GM12878 (cell line): ENCODE measurements at regions of chr9 and their contacts with region 1.

Region 1: GRCh38 chr9:89428901-89429890 is 68.7 kb downstream of the SEMA4D start:
- DNase-seq: no peak
- ATAC-seq: peak; percentile 25
- H3K4me3 ChIP-seq: no peak overlapping the region
- H3K27ac ChIP-seq: peak overlapping the region; percentile 90
- H3K4me1 ChIP-seq: peaks cover 81% of the 10 kb centered on the region
- H3K27me3 ChIP-seq: no peaks in the 10 kb centered on the region
- CTCF ChIP-seq: peak; percentile 60 to 84 (median 74)
- EP300 ChIP-seq: no peak
- POLR2A ChIP-seq: no peak
- RAD21 ChIP-seq: peak; percentile 85

Region 2: GRCh38 chr9:89318123-89319014 is 110.8 kb before region 1 on chr9 and contains the start of gene SECISBP2:
- CTCF ChIA-PET with region 1: interaction called, 4 read pairs
- POLR2A ChIA-PET with region 1: interaction called, 3 read pairs
- RAD21 ChIA-PET with region 1: no interaction called
- SMC1A ChIA-PET with region 1: interaction called, 7 read pairs
- in situ Hi-C with region 1: no loop called
- intact Hi-C with region 1: loop called (anchors 2 kb)
- DNase-seq: peak; percentile 79
- ATAC-seq: peak; percentile 92
- H3K4me3 ChIP-seq: peak within 1 kb of the TSS; percentile 74
- H3K27ac ChIP-seq: peak within 1 kb of the TSS; percentile 98
- H3K4me1 ChIP-seq: peaks cover 8% of the 10 kb centered on the region
- H3K27me3 ChIP-seq: no peaks in the 10 kb centered on the region
- CTCF ChIP-seq: peak; percentile 63 to 74 (median 72); a peak in 5 of 6 replicates
- EP300 ChIP-seq: peak; percentile 9 to 14; a peak in 2 of 4 replicates
- POLR2A ChIP-seq: peak; percentile 97
- RAD21 ChIP-seq: no peak; the same call in 1 of the 2 replicates
- polyA plus RNA-seq, gene SECISBP2: 4.6 to 6.6 TPM

Region 3: GRCh38 chr9:89410641-89411350 is 18.4 kb before region 1 on chr9:
- CTCF ChIA-PET with region 1: interaction called, 10 read pairs
- POLR2A ChIA-PET with region 1: interaction called, 11 read pairs
- RAD21 ChIA-PET with region 1: interaction called, 29 read pairs
- SMC1A ChIA-PET with region 1: interaction called, 46 read pairs
- in situ Hi-C with region 1: no loop called
- intact Hi-C with region 1: no loop called
- DNase-seq: peak; percentile 75
- ATAC-seq: peak; percentile 72
- H3K4me3 ChIP-seq: peak overlapping the region; percentile 48
- H3K27ac ChIP-seq: peak overlapping the region; percentile 66
- H3K4me1 ChIP-seq: peaks cover 66% of the 10 kb centered on the region
- H3K27me3 ChIP-seq: no peaks in the 10 kb centered on the region
- CTCF ChIP-seq: peak; percentile 34 to 63 (median 50); a peak in 5 of 6 replicates
- EP300 ChIP-seq: no peak
- POLR2A ChIP-seq: no peak
- RAD21 ChIP-seq: peak; percentile 79

Region 4: DNA sequence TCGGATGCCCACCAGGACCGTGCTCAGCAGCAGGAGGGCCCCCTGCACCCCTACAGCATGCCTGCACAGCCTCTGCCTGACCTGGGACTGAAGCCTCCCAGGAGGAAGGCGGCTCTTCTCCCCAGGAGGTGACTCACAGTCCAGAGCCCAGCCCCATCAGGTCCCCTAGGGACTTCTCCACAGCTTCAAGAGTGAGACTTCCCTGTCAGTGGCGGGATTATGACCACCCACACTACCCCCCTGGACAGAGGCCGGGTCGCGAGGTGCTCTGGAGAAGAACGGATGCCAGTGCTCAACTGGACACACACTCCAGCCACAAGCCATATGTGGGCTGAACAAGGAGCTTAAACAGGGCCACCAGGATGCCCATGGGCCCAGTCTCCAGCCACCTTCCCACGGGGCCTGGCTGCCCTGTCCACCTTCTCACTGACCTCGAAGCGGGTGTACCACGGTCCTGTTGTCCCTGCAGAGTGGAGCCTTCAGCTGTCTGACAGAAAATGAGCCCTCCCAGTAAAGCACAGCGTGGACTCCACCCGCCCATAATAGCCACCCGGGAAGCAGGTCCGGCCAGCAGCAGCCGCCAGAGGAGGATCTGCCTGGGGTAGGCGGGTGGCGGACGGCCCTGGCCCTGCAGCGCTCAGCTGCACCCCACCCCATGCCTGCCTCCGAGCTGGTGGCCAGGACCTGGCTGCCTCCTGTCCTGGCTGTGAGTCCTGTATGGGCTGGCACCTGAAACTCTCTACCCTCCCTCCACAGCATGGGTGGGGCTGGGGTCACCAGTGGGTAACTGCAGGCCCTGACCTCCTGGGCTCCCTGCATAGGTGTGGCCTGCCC is 14.0 kb after region 1 on chr9:
- CTCF ChIA-PET with region 1: interaction called, 29 read pairs
- POLR2A ChIA-PET with region 1: interaction called, 9 read pairs
- RAD21 ChIA-PET with region 1: interaction called, 9 read pairs
- SMC1A ChIA-PET with region 1: interaction called, 5 read pairs
- in situ Hi-C with region 1: no loop called
- intact Hi-C with region 1: no loop called
- DNase-seq: no peak
- ATAC-seq: peak; percentile 77
- H3K4me3 ChIP-seq: peak overlapping the region; percentile 3; the same call in 1 of the 2 replicates
- H3K27ac ChIP-seq: peak overlapping the region; percentile 63
- H3K4me1 ChIP-seq: peaks cover 51% of the 10 kb centered on the region
- H3K27me3 ChIP-seq: no peaks in the 10 kb centered on the region
- CTCF ChIP-seq: no peak
- EP300 ChIP-seq: no peak
- POLR2A ChIP-seq: no peak; the same call in 1 of the 2 replicates
- RAD21 ChIP-seq: no peak

Region 5: DNA sequence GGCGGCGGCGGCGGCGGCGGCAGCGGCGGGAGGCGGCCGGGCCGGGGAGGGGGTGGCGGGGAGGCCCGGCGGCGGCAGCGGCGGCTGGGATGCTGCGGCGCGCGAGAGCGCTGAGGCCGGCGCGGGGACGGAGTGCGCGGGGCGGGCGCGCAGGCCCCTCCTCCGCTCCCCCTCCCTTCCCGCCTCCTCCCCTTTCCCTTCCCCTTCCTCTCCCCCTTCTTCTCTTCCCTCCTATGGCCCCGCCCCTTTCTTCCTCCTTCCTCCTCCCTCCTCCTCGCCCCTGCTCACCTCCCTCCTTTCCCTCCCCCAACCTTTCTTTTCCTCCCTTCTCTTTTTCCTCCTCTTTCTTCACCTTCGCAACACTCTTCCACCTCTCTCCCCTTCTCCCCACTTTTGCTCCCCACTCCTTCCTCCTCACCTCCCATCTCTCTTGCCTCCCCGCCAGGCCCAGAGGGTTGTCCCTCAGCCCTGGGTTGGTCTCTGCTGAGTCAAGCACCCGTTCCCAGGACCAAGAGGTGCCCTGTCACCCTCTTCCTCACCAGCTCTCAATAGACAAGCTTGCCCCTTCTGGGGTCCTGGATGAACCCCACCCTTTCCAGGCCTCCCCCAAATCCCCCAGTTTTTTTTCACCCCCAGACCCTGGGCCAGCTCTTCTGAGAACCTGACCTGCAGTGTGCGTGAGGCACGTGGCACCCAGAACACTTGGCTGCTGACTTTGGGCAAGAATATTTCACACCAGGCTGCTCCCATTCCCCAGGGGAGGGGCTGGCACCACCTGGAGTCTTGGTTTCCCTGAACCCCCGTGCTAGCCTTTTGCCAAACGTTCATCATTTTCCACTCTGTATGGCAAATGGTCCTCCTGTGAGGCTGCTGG is 69.0 kb after region 1 on chr9 and contains the start of gene SEMA4D:
- CTCF ChIA-PET with region 1: interaction called, 9 read pairs
- POLR2A ChIA-PET with region 1: no interaction called
- RAD21 ChIA-PET with region 1: interaction called, 5 read pairs
- SMC1A ChIA-PET with region 1: interaction called, 3 read pairs
- in situ Hi-C with region 1: no loop called
- intact Hi-C with region 1: loop called (anchors 2 kb)
- DNase-seq: no peak
- ATAC-seq: peak; percentile 44
- H3K4me3 ChIP-seq: peak within 1 kb of the TSS; percentile 99
- H3K27ac ChIP-seq: peak within 1 kb of the TSS; percentile 72
- H3K4me1 ChIP-seq: peaks cover 37% of the 10 kb centered on the region
- H3K27me3 ChIP-seq: no peaks in the 10 kb centered on the region
- CTCF ChIP-seq: no peak
- EP300 ChIP-seq: no peak
- POLR2A ChIP-seq: peak; percentile 57; the same call in 1 of the 2 replicates
- RAD21 ChIP-seq: no peak
- polyA plus RNA-seq, gene SEMA4D: 15.1 to 22.7 TPM

Region 6: GRCh38 chr9:89536145-89536574 is 107.0 kb after region 1 on chr9:
- CTCF ChIA-PET with region 1: interaction called, 11 read pairs
- POLR2A ChIA-PET with region 1: interaction called, 3 read pairs
- RAD21 ChIA-PET with region 1: interaction called, 6 read pairs
- SMC1A ChIA-PET with region 1: interaction called, 4 read pairs
- in situ Hi-C with region 1: no loop called
- intact Hi-C with region 1: no loop called
- DNase-seq: no peak
- ATAC-seq: peak; percentile 72
- H3K4me3 ChIP-seq: no peak overlapping the region
- H3K27ac ChIP-seq: peak overlapping the region; percentile 40
- H3K4me1 ChIP-seq: peaks cover 21% of the 10 kb centered on the region
- H3K27me3 ChIP-seq: no peaks in the 10 kb centered on the region
- CTCF ChIP-seq: no peak
- EP300 ChIP-seq: no peak
- POLR2A ChIP-seq: no peak
- RAD21 ChIP-seq: no peak

Region 7: DNA sequence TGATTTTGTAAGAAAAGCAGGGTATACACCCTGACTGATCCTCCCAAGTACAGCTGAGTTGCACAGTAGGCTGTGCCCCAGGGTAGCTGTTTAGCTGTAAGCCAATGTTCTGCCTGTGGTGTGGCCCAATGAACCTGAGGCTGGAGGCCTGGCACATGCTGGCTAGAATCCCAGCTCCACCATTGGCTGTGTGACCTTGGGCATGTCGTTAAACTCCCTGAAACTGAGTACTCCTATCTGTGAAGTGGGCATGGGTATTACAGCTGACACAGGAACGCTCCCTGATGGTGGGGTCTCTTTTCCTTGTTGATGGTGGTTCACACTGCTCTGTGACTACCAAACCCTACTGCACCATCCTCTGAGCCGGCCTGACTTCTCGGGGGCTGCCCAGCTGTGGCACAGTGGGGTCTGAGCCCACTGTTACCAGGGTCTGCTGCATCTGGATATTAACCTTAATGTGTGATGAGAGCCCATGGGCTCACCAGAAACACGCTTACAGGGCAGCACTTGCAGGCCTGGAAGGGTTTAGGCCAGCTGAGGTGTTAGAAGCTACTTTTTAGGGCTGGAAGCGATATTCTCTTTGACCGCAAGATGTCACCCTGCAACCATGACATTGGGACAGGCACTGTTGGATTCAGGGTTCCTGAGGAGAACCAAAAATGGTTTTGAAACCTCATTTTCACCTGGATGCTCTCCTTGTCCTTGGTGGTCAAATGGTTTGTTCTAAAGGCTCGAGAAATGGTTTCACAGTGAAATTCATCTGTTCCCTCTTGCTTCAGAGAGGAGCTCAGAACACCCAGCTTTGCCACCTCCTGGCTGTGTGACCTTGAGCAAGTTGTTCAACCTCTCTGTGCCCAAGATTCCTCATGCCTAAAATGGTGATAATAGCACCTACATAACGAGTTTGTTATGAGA is 168.8 kb after region 1 on chr9:
- CTCF ChIA-PET with region 1: interaction called, 10 read pairs
- POLR2A ChIA-PET with region 1: no interaction called
- RAD21 ChIA-PET with region 1: interaction called, 5 read pairs
- SMC1A ChIA-PET with region 1: interaction called, 3 read pairs
- in situ Hi-C with region 1: no loop called
- intact Hi-C with region 1: no loop called
- DNase-seq: no peak
- ATAC-seq: peak; percentile 72
- H3K4me3 ChIP-seq: no peak overlapping the region
- H3K27ac ChIP-seq: no peak overlapping the region
- H3K4me1 ChIP-seq: no peaks in the 10 kb centered on the region
- H3K27me3 ChIP-seq: peaks cover 5 to 6% of the 10 kb centered on the region in 2 experiments
- CTCF ChIP-seq: peak; percentile 73 to 91 (median 90)
- EP300 ChIP-seq: no peak
- POLR2A ChIP-seq: no peak
- RAD21 ChIP-seq: peak; percentile 96